Sigmoid colon (tissue), 7 donors: ENCODE measurements at regions of chr6 and their contacts with region 1.

Region 1: GRCh38 chr6:25992413-25993037 is 29.9 kb downstream of the TRIM38 start:
- DNase-seq: peak; percentile 97
- H3K4me3 ChIP-seq: peak overlapping the region; percentile 46 to 62 (median 60)
- H3K27ac ChIP-seq: peak overlapping the region; percentile 87 to 91 (median 90)
- H3K4me1 ChIP-seq: peaks cover 0 to 15% (median 12%) of the 10 kb centered on the region in 4 donors
- H3K27me3 ChIP-seq: no peaks in the 10 kb centered on the region
- CTCF ChIP-seq: peak; percentile 90 to 99 (median 96)
- EP300 ChIP-seq: peak in 1 of 4 donors; percentile 1
- POLR2A ChIP-seq: peak; percentile 72 to 91

Region 2: GRCh38 chr6:25726122-25726911 is 266.2 kb before region 1 on chr6:
- intact Hi-C with region 1: loop called (anchors 10 kb)
- DNase-seq: no peak
- H3K4me3 ChIP-seq: no peak overlapping the region
- H3K27ac ChIP-seq: no peak overlapping the region
- H3K4me1 ChIP-seq: no peaks in the 10 kb centered on the region
- H3K27me3 ChIP-seq: no peaks in the 10 kb centered on the region
- CTCF ChIP-seq: no peak
- EP300 ChIP-seq: no peak
- POLR2A ChIP-seq: no peak

Region 3: GRCh38 chr6:25962149-25963127 is 30.1 kb before region 1 on chr6 and contains the start of gene TRIM38:
- intact Hi-C with region 1: loop called (anchors 2 kb)
- DNase-seq: peak; percentile 91
- H3K4me3 ChIP-seq: peak within 1 kb of the TSS; percentile 56 to 62 (median 61)
- H3K27ac ChIP-seq: peak within 1 kb of the TSS; percentile 86 to 91 (median 86)
- H3K4me1 ChIP-seq: peaks cover 0 to 53% (median 42%) of the 10 kb centered on the region in 4 donors
- H3K27me3 ChIP-seq: no peaks in the 10 kb centered on the region
- CTCF ChIP-seq: no peak
- EP300 ChIP-seq: no peak
- POLR2A ChIP-seq: peak; percentile 92 to 94
- total RNA-seq, gene TRIM38: 7.5 to 13.3 (median 8.2) TPM